ENCODE measurements at regions of chr4 and their contacts with region 1.

Region 1: GRCh38 chr4:126223784-126224407 is 909.1 kb downstream of the FAT4 start:
- DNase-seq: peak; percentile 36
- H3K4me3 ChIP-seq: no peak overlapping the region
- H3K27ac ChIP-seq: no peak overlapping the region
- H3K4me1 ChIP-seq: no peaks in the 10 kb centered on the region
- H3K27me3 ChIP-seq: no peaks in the 10 kb centered on the region
- CTCF ChIP-seq: peak; percentile 29 to 52
- POLR2A ChIP-seq: no peak

Region 2: DNA sequence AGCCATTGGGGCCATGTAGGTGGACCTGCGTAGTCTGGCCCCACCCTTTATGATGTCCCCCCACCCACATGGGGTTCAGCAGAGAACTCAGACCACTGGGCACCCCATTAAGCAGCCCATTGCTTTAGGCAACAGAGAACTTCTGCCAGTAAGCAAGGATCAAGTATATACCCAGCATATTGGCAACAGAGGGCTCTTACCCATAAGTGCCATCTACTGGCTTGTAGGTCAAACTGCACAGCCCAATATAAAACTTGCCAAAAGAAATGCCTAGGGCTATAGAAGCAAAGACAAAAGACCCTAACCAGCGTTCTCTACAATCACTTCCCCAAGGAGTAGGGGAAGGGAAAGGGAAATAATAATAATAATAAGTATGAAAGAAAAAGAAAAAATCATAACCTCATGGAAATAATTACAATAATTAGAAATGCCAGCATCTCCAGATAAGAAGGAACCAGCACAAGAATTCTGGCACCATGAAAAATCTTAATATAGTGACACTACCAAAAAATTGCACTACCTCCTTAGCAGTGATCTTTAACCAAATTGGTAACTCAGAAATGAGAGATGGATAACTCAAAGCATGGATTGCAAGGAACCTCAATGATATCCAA is 181.6 kb after region 1 on chr4:
- CTCF ChIA-PET with region 1: no interaction called
- POLR2A ChIA-PET with region 1: no interaction called
- dilution Hi-C with region 1: no loop called
- intact Hi-C with region 1: loop called (anchors 10 kb)
- DNase-seq: peak; percentile 26
- H3K4me3 ChIP-seq: no peak overlapping the region
- H3K27ac ChIP-seq: no peak overlapping the region
- H3K4me1 ChIP-seq: no peaks in the 10 kb centered on the region
- H3K27me3 ChIP-seq: no peaks in the 10 kb centered on the region
- CTCF ChIP-seq: peak; percentile 32 to 60
- POLR2A ChIP-seq: no peak

Region 3: GRCh38 chr4:126583509-126583908 is 359.6 kb after region 1 on chr4:
- CTCF ChIA-PET with region 1: interaction called, 32 read pairs
- POLR2A ChIA-PET with region 1: no interaction called
- dilution Hi-C with region 1: no loop called
- intact Hi-C with region 1: no loop called
- DNase-seq: peak; percentile 6
- H3K4me3 ChIP-seq: no peak overlapping the region
- H3K27ac ChIP-seq: no peak overlapping the region
- H3K4me1 ChIP-seq: no peaks in the 10 kb centered on the region
- H3K27me3 ChIP-seq: no peaks in the 10 kb centered on the region
- CTCF ChIP-seq: peak in 1 of 2 donors; percentile 7
- POLR2A ChIP-seq: no peak

Region 4: GRCh38 chr4:126604268-126604867 is 380.5 kb after region 1 on chr4:
- CTCF ChIA-PET with region 1: interaction called, 20 read pairs
- POLR2A ChIA-PET with region 1: no interaction called
- dilution Hi-C with region 1: no loop called
- intact Hi-C with region 1: no loop called
- DNase-seq: peak; percentile 39
- H3K4me3 ChIP-seq: no peak overlapping the region
- H3K27ac ChIP-seq: no peak overlapping the region
- H3K4me1 ChIP-seq: no peaks in the 10 kb centered on the region
- H3K27me3 ChIP-seq: no peaks in the 10 kb centered on the region
- CTCF ChIP-seq: peak; percentile 48 to 65
- POLR2A ChIP-seq: no peak

Region 5: DNA sequence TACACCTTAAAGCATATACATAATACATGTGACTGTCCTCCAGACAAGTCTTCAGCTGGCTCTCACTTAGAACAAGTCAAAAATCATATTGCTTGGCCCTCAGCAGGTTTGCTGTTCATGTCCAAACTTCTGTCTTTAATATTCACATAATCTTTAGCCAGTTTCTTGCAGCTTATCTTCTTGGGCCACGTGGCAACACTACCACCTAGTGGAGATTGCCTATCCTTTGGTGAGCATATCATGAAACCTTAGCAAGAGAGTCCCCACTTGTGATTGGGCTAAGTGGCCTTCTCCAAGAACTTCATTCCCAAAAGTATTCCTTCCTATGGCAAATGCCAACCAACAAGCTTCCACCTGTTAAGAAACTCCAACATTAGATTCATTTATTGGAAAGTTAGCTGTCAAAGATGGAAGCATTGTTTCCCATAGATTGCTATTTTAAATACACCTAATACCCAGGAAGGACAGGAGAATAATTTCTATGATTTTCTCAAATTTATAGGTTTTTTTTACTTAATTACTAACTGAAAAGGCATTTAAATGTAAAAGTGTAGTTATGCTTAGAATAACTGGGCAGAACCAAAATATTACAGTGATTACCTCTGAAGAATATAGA is 1176.9 kb after region 1 on chr4:
- CTCF ChIA-PET with region 1: interaction called, 14 read pairs
- POLR2A ChIA-PET with region 1: no interaction called
- dilution Hi-C with region 1: no loop called
- intact Hi-C with region 1: loop called (anchors 1 kb)
- DNase-seq: peak; percentile 68
- H3K4me3 ChIP-seq: no peak overlapping the region
- H3K27ac ChIP-seq: no peak overlapping the region
- H3K4me1 ChIP-seq: no peaks in the 10 kb centered on the region
- H3K27me3 ChIP-seq: no peaks in the 10 kb centered on the region
- CTCF ChIP-seq: peak; percentile 59 to 69
- POLR2A ChIP-seq: no peak

Measured in endothelial cell of umbilical vein (primary cell).